SK-N-SH (cell line): ENCODE measurements at regions of chr3 and their contacts with region 1.

Region 1: GRCh38 chr3:25648107-25648535 is 16.6 kb downstream of the TOP2B start:
- DNase-seq: peak; percentile 59
- H3K4me3 ChIP-seq: peak overlapping the region in 1 of 2 experiments; percentile 40; a peak in 1 of 4 replicates
- H3K27ac ChIP-seq: no peak overlapping the region
- H3K4me1 ChIP-seq: peaks cover 0 to 2% of the 10 kb centered on the region in 2 experiments; a peak in 2 of 4 replicates
- H3K27me3 ChIP-seq: no peaks in the 10 kb centered on the region
- CTCF ChIP-seq: peak; percentile 90
- EP300 ChIP-seq: no peak
- RAD21 ChIP-seq: peak; percentile 92

Region 2: DNA sequence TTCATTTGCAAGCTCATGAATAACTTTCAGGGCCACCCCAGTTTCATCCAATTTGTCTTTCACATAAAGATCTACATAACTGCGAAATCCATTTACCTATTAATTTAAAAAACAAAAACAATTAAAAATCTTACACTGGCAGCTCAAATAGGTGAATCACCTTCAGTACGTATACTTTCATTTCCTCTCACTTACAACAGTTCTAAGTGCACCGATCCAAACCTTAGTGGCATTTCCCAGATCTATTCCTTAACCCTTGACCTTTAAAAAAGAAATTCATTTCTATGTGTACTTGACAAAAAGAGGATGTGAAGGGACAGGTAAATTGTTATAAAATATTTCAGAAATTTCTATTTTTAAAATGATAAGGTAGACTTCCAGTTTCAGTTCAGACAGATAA is 14.2 kb before region 1 on chr3:
- CTCF ChIA-PET with region 1: interaction called, 46 read pairs
- POLR2A ChIA-PET with region 1: no interaction called
- DNase-seq: no peak
- H3K4me3 ChIP-seq: no peak overlapping the region
- H3K27ac ChIP-seq: no peak overlapping the region
- H3K4me1 ChIP-seq: no peaks in the 10 kb centered on the region; a peak in 1 of 4 replicates
- H3K27me3 ChIP-seq: no peaks in the 10 kb centered on the region
- CTCF ChIP-seq: no peak
- EP300 ChIP-seq: no peak
- RAD21 ChIP-seq: no peak

Region 3: DNA sequence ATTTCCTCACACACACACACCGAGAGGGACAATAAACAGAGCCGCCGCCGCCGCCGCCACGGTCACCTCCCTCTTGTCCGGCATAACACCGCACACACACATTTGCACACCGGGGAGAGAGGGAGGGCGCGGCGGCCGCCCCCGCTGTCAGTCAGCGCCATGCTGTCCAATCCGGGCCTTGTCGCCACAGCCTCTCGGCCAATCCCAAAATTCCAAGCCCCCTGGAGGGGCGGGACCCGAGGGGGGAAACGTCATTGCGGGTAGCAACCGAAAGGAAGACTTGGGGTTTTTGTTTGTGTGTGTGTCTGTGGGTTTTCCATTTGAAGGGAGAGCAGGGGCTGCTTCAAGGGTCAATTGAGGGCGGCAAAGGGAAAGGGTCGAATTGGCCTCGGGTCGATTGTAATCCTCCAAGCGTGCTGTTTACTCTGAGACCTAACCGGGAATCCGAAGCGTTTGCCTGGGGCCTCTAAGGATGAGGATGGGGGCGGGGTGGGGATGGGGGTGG is 16.7 kb after region 1 on chr3 and contains the start of gene TOP2B:
- CTCF ChIA-PET with region 1: interaction called, 25 read pairs
- POLR2A ChIA-PET with region 1: no interaction called
- DNase-seq: peak; percentile 97
- H3K4me3 ChIP-seq: peak within 1 kb of the TSS; percentile 88 to 96
- H3K27ac ChIP-seq: peak within 1 kb of the TSS; percentile 81 to 97
- H3K4me1 ChIP-seq: peaks cover 6 to 20% of the 10 kb centered on the region in 2 experiments
- H3K27me3 ChIP-seq: no peaks in the 10 kb centered on the region
- CTCF ChIP-seq: no peak
- EP300 ChIP-seq: peak; percentile 10 to 82; a peak in 3 of 4 replicates
- RAD21 ChIP-seq: no peak
- polyA plus RNA-seq, gene TOP2B: 20.4 and 22.1 TPM in 2 replicates

Region 4: GRCh38 chr3:25801786-25802185 is 153.7 kb after region 1 on chr3:
- CTCF ChIA-PET with region 1: interaction called, 10 read pairs
- POLR2A ChIA-PET with region 1: no interaction called
- DNase-seq: no peak
- H3K4me3 ChIP-seq: no peak overlapping the region
- H3K27ac ChIP-seq: no peak overlapping the region
- H3K4me1 ChIP-seq: no peaks in the 10 kb centered on the region
- H3K27me3 ChIP-seq: no peaks in the 10 kb centered on the region
- CTCF ChIP-seq: no peak
- EP300 ChIP-seq: no peak
- RAD21 ChIP-seq: no peak

Region 5: DNA sequence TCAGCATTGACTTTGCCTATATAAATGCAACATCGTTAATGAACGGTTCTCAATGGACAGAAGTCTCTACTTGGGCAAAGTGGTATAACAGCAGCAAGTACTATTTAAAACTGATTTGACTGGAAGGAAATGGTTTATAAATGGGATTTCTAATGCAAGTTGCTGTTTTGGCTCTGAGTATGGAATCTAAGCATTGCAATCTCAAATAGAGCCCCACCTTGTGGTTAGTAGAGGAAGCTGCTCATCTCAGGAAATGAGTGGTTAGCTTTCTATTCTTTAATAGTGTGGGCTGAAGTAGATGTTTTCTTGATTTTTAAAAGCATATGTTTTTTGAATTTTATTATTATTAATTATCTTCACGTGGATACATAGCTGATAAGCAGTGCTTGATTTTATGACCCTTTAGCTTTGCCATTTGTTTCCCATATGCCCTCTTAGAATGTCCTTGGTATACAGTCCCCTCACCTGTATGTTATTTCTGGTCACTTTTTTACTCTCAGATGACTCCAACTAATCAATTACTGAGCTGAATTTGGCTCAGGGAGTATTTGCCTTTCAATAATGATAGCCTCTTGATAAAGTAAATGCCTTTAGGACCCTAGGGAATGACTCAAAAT is 208.9 kb after region 1 on chr3:
- CTCF ChIA-PET with region 1: interaction called, 19 read pairs
- POLR2A ChIA-PET with region 1: no interaction called
- DNase-seq: peak; percentile 59
- H3K4me3 ChIP-seq: no peak overlapping the region
- H3K27ac ChIP-seq: no peak overlapping the region
- H3K4me1 ChIP-seq: peaks cover 0 to 12% of the 10 kb centered on the region in 2 experiments; a peak in 2 of 4 replicates
- H3K27me3 ChIP-seq: no peaks in the 10 kb centered on the region
- CTCF ChIP-seq: peak; percentile 90
- EP300 ChIP-seq: no peak
- RAD21 ChIP-seq: peak; percentile 67

Region 6: DNA sequence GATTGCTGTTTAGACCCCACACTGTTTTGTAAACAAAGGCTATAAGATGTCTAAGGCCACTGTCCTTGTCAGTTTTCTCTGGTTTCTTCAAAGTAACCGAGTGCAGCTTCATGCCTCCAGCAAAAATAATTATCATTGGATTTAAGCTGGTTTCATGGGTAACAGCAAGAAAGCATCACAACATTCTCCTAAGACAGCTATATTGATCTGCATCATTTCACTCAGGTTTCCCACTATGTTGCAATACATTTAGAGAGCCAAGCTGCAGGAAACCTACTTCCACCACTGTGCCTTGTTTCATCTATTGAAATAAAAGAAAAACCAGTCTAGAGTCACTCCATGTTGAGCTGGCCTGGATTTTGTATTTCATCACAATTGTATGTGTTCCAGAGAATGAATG is 493.2 kb after region 1 on chr3:
- CTCF ChIA-PET with region 1: no interaction called
- POLR2A ChIA-PET with region 1: no interaction called
- DNase-seq: no peak
- H3K4me3 ChIP-seq: no peak overlapping the region
- H3K27ac ChIP-seq: no peak overlapping the region
- H3K4me1 ChIP-seq: no peaks in the 10 kb centered on the region
- H3K27me3 ChIP-seq: no peaks in the 10 kb centered on the region
- CTCF ChIP-seq: no peak
- EP300 ChIP-seq: no peak
- RAD21 ChIP-seq: no peak

Region 7: GRCh38 chr3:26712211-26713026 is 1064.3 kb after region 1 on chr3:
- CTCF ChIA-PET with region 1: interaction called, 11 read pairs
- POLR2A ChIA-PET with region 1: no interaction called
- DNase-seq: peak; percentile 26
- H3K4me3 ChIP-seq: no peak overlapping the region; a peak in 1 of 4 replicates
- H3K27ac ChIP-seq: no peak overlapping the region
- H3K4me1 ChIP-seq: no peaks in the 10 kb centered on the region; a peak in 1 of 4 replicates
- H3K27me3 ChIP-seq: no peaks in the 10 kb centered on the region
- CTCF ChIP-seq: peak; percentile 58
- EP300 ChIP-seq: no peak
- RAD21 ChIP-seq: peak; percentile 89